ENCODE measurements at regions of chr7 and their contacts with region 1.

Region 1: GRCh38 chr7:137454246-137454724 is 110.8 kb upstream of the PTN start:
- DNase-seq: no peak
- H3K4me3 ChIP-seq: no peak overlapping the region
- CTCF ChIP-seq: peak; percentile 45

Region 2: DNA sequence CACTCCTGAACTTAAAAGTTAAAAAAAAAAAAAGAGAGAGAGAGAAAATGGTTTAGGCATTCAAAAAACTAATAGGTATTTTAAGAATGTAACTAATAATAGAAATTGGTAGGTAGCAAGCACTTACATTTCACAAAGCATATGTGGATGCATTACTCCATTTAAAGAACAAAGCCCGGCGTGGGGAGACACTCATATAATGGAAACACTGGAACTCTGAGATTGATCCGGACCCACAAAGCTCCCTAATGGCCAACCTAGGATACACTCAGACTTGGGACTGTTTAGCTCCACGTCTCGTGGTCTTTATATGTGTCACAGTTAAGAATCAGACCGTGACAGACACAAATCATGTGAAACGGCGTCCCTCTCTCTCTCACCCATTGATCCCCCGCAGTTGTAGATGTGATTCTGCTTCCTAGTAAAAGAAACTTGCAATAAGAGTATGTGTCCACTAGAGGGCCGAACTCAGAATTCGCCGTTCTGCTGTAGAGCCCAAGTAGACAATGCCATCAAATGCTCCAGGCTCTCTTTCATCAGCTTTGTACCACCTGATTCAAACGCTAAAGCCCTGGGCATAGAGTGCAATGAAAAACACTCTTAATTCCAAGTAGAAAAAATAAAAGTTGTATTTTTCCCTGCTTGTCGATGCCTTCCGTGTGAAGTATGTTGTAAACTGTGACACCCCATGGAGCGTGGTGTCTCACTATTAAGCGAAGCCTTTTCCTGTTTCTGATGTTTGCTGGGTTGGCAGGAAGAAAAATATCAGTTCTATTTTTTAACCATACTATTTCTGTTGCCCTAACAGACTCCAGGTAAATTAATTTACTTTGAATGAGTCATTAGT is 1048.1 kb before region 1 on chr7:
- CTCF ChIA-PET with region 1: interaction called, 11 read pairs
- POLR2A ChIA-PET with region 1: no interaction called
- DNase-seq: no peak
- H3K4me3 ChIP-seq: no peak overlapping the region
- CTCF ChIP-seq: peak; percentile 59

Region 3: GRCh38 chr7:137169282-137169698 is 285.0 kb before region 1 on chr7:
- CTCF ChIA-PET with region 1: interaction called, 26 read pairs
- POLR2A ChIA-PET with region 1: no interaction called
- DNase-seq: peak; percentile 46
- H3K4me3 ChIP-seq: no peak overlapping the region
- CTCF ChIP-seq: peak; percentile 75

Region 4: GRCh38 chr7:137373507-137373906 is 80.8 kb before region 1 on chr7:
- CTCF ChIA-PET with region 1: no interaction called
- POLR2A ChIA-PET with region 1: no interaction called
- DNase-seq: no peak
- H3K4me3 ChIP-seq: no peak overlapping the region
- CTCF ChIP-seq: no peak

Region 5: GRCh38 chr7:137390076-137390475 is 64.2 kb before region 1 on chr7:
- CTCF ChIA-PET with region 1: no interaction called
- POLR2A ChIA-PET with region 1: no interaction called
- DNase-seq: no peak
- H3K4me3 ChIP-seq: no peak overlapping the region
- CTCF ChIP-seq: no peak

Region 6: DNA sequence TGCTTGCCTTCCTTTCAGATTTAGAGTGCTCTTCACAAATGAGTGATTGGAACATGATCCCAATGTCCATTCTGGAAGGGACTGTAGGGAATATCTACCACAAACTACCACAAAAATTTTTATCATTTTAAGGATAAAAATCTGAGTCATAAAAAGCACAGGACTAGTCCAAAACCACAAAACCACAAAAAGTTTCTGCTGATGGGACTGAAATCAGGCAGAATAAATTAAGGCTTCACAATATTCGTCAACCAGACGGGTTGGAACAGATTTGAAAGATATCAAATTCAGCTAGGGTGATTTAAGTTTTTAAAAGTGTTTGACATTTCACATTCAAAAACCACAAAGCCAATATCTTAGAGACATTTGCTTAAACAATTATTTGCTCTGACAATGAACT is 10.7 kb before region 1 on chr7:
- CTCF ChIA-PET with region 1: interaction called, 14 read pairs
- POLR2A ChIA-PET with region 1: no interaction called
- DNase-seq: no peak
- H3K4me3 ChIP-seq: no peak overlapping the region
- CTCF ChIP-seq: no peak

Region 7: GRCh38 chr7:137475966-137476365 is 21.7 kb after region 1 on chr7:
- CTCF ChIA-PET with region 1: interaction called, 12 read pairs
- POLR2A ChIA-PET with region 1: no interaction called
- DNase-seq: no peak
- H3K4me3 ChIP-seq: no peak overlapping the region
- CTCF ChIP-seq: no peak

Measured in AG04449 (cell line).